Activated CD4-positive, alpha-beta T cell treated with anti-CD3 and anti-CD28 coated beads, Interleukin-2, amount 10 ng/mL, durations not matched to agents 7 days and 5 days (primary cell): ENCODE measurements at regions of chr10 and their contacts with region 1.

Region 1: GRCh38 chr10:5446390-5446926 is 34.1 kb downstream of the NET1 start:
- DNase-seq: peak; percentile 85
- H3K4me3 Mint-ChIP-seq: peak overlapping the region; percentile 76
- H3K27ac Mint-ChIP-seq: peak overlapping the region; percentile 82
- H3K4me1 Mint-ChIP-seq: peaks cover 71% of the 10 kb centered on the region
- H3K27me3 Mint-ChIP-seq: no peaks in the 10 kb centered on the region

Region 2: DNA sequence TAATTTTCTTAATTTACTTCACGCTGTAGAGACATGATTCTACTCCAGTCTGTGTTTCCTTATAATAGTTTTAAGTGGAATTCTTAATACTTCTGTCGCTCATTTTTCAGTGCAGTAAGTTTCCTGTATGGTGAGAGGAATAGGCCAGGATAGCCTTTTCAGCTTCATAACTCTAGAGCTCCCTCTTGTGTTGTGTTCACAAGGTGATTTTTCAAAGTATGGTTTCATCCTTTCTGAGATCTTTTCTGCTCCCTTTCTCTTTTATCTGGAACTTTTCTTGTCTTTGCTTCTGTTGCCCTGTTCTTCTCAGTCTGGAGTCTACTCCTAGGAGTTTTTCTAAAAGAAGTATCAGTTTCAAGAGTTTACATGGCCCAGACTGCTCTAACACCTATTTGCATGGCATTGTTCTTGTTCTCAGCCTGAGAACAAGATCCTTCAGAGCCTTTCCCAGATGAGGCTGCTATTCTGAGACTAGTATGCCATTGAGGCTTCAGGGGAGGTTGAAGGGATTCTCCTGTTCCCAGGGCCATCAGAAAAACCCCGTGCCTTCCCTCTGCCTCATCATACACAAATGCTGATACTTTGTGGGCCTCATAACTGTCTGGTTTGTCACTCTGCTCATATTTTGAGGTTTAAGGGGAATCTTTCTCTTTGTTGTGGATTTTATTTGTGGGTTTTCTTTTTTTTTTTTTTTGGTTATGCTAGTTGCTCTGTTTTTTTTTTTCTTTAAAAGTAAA is 12.3 kb before region 1 on chr10:
- CTCF ChIA-PET with region 1: interaction called, 13 read pairs
- POLR2A ChIA-PET with region 1: no interaction called
- DNase-seq: peak; percentile 36
- H3K4me3 Mint-ChIP-seq: no peak overlapping the region
- H3K27ac Mint-ChIP-seq: peak overlapping the region; percentile 14
- H3K4me1 Mint-ChIP-seq: peaks cover 12% of the 10 kb centered on the region
- H3K27me3 Mint-ChIP-seq: no peaks in the 10 kb centered on the region

Region 3: GRCh38 chr10:5629303-5630111 is 183.0 kb after region 1 on chr10:
- CTCF ChIA-PET with region 1: interaction called, 11 read pairs
- POLR2A ChIA-PET with region 1: no interaction called
- DNase-seq: peak; percentile 87
- H3K4me3 Mint-ChIP-seq: no peak overlapping the region
- H3K27ac Mint-ChIP-seq: no peak overlapping the region
- H3K4me1 Mint-ChIP-seq: peaks cover 21% of the 10 kb centered on the region
- H3K27me3 Mint-ChIP-seq: peaks cover 15% of the 10 kb centered on the region